ENCODE measurements at regions of chr2 and their contacts with region 1.

Region 1: DNA sequence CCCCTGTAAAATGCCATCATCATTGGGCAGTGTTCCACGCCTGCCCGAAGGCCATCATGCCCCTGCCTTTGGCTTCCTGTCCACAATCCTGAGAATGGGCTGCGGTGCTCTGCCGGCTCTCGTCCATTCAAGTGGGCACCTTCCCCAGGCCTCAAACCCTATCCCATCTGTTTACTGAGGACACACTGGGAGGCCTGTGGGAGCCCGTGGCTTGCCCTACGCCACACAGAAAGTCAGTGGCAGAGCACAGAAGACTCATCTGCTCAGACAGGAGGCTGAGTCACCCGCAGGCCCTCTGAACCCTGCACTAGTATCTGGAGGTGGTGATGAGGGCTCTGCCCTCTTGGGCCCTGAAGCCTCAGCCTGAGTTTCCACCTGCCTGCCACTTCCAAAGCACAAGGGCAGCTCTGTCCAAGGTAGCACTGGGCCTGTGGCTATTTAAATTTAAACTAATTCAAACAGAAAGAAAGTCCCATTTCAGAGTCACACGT is 19.1 kb upstream of the ANKRD53 start:
- DNase-seq: no peak
- H3K4me3 ChIP-seq: no peak overlapping the region
- H3K27ac ChIP-seq: no peak overlapping the region
- H3K4me1 ChIP-seq: no peaks in the 10 kb centered on the region
- H3K27me3 ChIP-seq: no peaks in the 10 kb centered on the region
- CTCF ChIP-seq: no peak
- POLR2A ChIP-seq: no peak

Region 2: DNA sequence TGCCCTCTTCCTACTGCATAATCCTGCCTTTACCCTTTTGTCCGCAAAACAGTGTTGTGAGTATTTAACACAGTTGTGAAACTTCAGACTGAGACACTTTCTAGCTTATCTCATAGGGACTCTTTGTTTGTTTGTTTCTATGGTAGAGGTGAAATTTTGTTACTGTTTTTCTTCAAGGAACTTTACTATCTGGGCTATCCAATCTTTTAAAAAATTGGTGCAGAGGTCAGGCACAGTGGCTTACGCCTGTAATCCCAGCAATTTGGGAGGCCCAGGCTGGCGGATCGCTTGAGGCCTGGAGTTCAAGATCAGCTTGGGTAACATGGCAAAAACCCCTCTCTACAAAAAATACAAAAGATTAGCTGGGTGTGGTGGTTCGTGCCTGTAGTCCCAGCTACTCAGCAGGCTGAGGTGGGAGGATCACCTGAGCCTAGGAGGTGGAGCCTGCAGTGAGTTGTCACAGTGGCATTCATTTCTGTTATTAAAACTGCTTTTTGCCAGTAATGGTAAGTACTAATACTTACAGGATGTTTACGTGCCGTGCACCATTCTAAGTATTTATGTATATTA is 1111.0 kb before region 1 on chr2:
- intact Hi-C with region 1: loop called (anchors 5 kb)
- DNase-seq: no peak
- H3K4me3 ChIP-seq: no peak overlapping the region
- H3K27ac ChIP-seq: no peak overlapping the region
- H3K4me1 ChIP-seq: no peaks in the 10 kb centered on the region
- H3K27me3 ChIP-seq: no peaks in the 10 kb centered on the region
- CTCF ChIP-seq: no peak
- POLR2A ChIP-seq: no peak

Measured in breast epithelium (tissue), 4 donors.